PC-3 (cell line): ENCODE measurements at regions of chr13 and their contacts with region 1.

Region 1: DNA sequence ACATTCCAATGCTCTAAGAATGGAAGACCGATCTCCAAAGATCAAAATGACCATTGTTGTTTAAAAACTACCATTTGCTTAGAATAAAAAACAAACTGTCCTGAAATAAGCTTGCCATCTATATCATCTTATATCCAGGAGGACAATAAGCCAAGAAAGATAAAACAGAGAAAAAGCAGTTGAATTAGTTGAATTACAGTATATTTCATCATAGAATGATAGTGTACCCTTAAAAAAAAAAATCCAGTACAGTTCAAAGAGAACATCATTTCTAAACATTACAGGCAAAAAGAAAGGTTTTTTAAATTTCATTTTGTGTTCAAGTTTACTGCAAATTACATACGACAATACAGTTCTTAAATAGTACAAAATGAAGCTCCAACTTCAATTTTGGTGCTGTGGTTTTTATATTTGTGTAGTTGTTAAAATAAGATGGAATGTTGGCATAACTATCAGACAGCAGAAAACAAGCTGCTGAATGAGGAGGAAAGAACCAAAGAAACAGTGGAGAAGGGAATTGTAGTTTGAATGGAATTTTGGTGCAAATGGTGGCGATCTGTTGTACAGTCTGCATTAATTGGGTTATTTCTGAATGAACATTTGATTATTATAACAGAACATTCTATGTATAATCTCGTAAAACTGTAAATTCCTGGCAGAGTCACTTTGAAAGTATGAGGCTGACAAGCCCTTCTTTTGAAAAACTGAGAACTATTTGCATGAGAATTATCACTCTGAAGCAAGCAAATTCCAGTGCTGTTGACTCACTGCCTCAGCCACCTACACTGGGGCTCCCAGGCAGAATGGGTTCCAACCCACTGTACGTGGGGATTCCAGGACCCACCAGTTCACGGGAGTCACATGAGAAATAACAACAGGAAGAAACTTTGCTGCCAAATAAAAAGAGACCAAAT is 37.7 kb downstream of the LHFPL6 start:
- DNase-seq: peak; percentile 82
- ATAC-seq: peak; percentile 88
- H3K4me3 ChIP-seq: peak overlapping the region; percentile 48
- H3K27ac ChIP-seq: peak overlapping the region; percentile 69
- H3K4me1 ChIP-seq: peaks cover 44% of the 10 kb centered on the region
- H3K27me3 ChIP-seq: no peaks in the 10 kb centered on the region
- CTCF ChIP-seq: no peak

Region 2: DNA sequence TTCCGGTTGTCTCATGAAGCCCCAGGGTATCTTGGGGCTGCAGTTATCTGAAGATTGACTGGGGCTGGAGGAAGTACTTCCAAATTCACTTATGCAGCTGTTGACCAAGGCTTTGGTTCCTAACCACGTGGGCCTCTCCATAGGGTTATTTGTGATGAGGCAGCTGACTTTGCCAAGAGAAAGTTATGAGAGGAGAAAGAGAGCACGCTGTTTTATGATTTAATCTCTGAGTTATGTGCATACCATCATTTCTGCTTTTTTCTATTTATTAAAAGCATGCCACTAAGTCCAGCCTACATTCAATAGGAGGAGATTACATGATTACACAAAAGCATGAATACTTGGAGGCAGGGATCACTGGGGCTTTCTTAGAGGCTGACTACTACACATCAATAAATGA is 311.5 kb before region 1 on chr13:
- CTCF ChIA-PET with region 1: no interaction called
- POLR2A ChIA-PET with region 1: no interaction called
- intact Hi-C with region 1: no loop called
- DNase-seq: no peak
- ATAC-seq: no peak
- H3K4me3 ChIP-seq: no peak overlapping the region
- H3K27ac ChIP-seq: no peak overlapping the region
- H3K4me1 ChIP-seq: no peaks in the 10 kb centered on the region
- H3K27me3 ChIP-seq: peaks cover 17% of the 10 kb centered on the region
- CTCF ChIP-seq: no peak

Region 3: GRCh38 chr13:39527961-39528660 is 37.2 kb before region 1 on chr13:
- CTCF ChIA-PET with region 1: no interaction called
- POLR2A ChIA-PET with region 1: no interaction called
- intact Hi-C with region 1: loop called (anchors 2 kb)
- DNase-seq: peak; percentile 88
- ATAC-seq: peak; percentile 94
- H3K4me3 ChIP-seq: no peak overlapping the region
- H3K27ac ChIP-seq: peak overlapping the region; percentile 67
- H3K4me1 ChIP-seq: peaks cover 40% of the 10 kb centered on the region
- H3K27me3 ChIP-seq: no peaks in the 10 kb centered on the region
- CTCF ChIP-seq: no peak

Region 4: DNA sequence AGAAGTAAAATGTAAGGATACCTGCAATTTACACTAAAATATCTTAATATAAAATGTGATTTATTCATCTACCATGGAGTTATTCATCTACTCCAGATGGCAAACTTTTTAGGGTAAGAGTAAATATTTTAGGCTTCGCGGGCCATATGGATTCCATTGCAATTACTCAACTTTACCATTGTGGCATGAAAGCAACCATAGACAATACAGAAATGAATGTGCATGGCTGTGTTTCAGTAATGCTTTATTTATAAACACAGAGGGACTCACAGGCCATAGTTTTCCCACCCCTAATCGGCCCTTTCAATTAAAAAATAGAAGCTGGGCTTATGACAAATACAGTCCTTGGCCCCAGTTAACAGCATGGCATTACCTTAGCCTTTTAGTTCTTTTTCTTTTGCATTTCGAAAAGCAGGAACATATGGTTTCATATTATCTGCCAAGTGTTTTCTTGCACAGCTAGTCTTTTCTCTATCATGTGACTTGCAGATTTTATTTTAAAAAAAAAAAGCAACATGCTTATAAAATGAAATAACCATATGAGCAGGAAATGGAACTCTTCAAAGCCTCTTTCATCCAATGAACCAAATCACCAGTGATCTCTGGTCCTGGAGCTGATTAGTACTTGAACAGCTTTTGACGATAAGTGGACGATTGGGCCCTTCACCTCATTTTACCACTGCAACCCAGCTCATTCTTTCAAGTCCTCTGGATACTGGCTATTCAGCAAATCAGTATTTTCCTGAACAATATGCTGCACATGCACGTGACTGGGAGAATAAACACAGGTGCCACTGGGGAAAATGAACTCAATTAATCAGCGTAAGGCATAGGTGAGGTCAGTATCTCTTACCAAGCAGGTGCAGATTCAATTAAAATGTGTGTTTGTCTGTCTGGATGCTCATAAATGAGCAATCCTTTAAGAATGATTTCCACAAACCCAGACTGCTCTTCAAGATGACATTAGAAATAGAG is 26.2 kb before region 1 on chr13:
- CTCF ChIA-PET with region 1: no interaction called
- POLR2A ChIA-PET with region 1: no interaction called
- intact Hi-C with region 1: loop called (anchors 2 kb)
- DNase-seq: peak; percentile 42
- ATAC-seq: no peak
- H3K4me3 ChIP-seq: no peak overlapping the region
- H3K27ac ChIP-seq: no peak overlapping the region
- H3K4me1 ChIP-seq: peaks cover 16% of the 10 kb centered on the region; the same call in 1 of the 2 replicates
- H3K27me3 ChIP-seq: no peaks in the 10 kb centered on the region
- CTCF ChIP-seq: no peak